Ascending aorta (tissue), 2 donors: ENCODE measurements at regions of chr3 and their contacts with region 1.

Region 1: GRCh38 chr3:157136647-157137387 is 23.1 kb downstream of the CCNL1 start:
- DNase-seq: no peak
- H3K4me3 ChIP-seq: no peak overlapping the region
- H3K27ac ChIP-seq: peak overlapping the region; percentile 23 to 62
- H3K4me1 ChIP-seq: peaks cover 14 to 20% of the 10 kb centered on the region in 2 donors
- H3K27me3 ChIP-seq: no peaks in the 10 kb centered on the region
- CTCF ChIP-seq: no peak

Region 2: GRCh38 chr3:156535162-156535627 is 601.6 kb before region 1 on chr3:
- intact Hi-C with region 1: loop called (anchors 2 kb)
- DNase-seq: peak; percentile 48 to 90
- H3K4me3 ChIP-seq: no peak overlapping the region
- H3K27ac ChIP-seq: peak overlapping the region; percentile 62 to 78
- H3K4me1 ChIP-seq: peaks cover 0 to 5% of the 10 kb centered on the region in 2 donors
- H3K27me3 ChIP-seq: no peaks in the 10 kb centered on the region
- CTCF ChIP-seq: peak; percentile 26 to 41 (median 37)

Region 3: GRCh38 chr3:156816800-156817645 is 319.8 kb before region 1 on chr3:
- intact Hi-C with region 1: loop called (anchors 5 kb)
- DNase-seq: peak; percentile 20 to 90
- H3K4me3 ChIP-seq: peak overlapping the region; percentile 66 to 67
- H3K27ac ChIP-seq: peak overlapping the region; percentile 58 to 74
- H3K4me1 ChIP-seq: no peaks in the 10 kb centered on the region
- H3K27me3 ChIP-seq: no peaks in the 10 kb centered on the region
- CTCF ChIP-seq: peak in 1 of 3 experiments; percentile 16

Region 4: GRCh38 chr3:157201648-157202278 is 64.9 kb after region 1 on chr3:
- intact Hi-C with region 1: no loop called
- DNase-seq: no peak
- H3K4me3 ChIP-seq: no peak overlapping the region
- H3K27ac ChIP-seq: no peak overlapping the region
- H3K4me1 ChIP-seq: no peaks in the 10 kb centered on the region
- H3K27me3 ChIP-seq: no peaks in the 10 kb centered on the region
- CTCF ChIP-seq: peak in 2 of 3 experiments; percentile 12 to 37

Region 5: GRCh38 chr3:157999246-157999645 is 862.4 kb after region 1 on chr3:
- intact Hi-C with region 1: no loop called
- DNase-seq: no peak
- H3K4me3 ChIP-seq: no peak overlapping the region
- H3K27ac ChIP-seq: no peak overlapping the region
- H3K4me1 ChIP-seq: no peaks in the 10 kb centered on the region
- H3K27me3 ChIP-seq: no peaks in the 10 kb centered on the region
- CTCF ChIP-seq: no peak